CD8-positive, alpha-beta T cell (primary cell): ENCODE measurements at regions of chr16 and their contacts with region 1.

Region 1: DNA sequence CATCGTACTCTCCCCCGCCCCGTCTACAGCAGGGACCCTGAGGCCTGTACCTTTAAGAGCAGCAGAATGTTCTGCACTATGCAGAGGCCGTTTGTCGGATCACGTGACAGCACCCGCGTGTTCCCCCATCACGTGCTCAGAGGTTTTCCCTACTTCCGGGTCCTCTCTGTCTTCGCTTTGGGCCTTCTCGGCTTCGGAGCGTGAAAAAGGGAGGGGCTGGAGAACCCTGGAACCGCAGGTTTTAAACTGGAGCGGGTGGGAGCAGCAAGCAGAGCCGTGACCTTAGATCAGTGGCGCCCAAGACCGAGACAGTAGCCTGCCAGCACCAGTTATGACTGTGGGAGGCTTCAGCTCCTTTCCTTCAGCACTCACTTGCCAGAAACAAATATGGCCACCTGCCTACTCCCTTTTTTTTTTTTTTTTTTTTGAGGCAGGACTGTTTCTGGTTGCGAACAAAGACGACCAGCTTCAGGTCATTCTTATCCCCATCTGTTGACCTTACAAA is at the start of gene CLN3:
- DNase-seq: peak; percentile 74 to 95 (median 89)
- ATAC-seq: peak; percentile 48
- H3K4me3 ChIP-seq: peak within 1 kb of the TSS; percentile 95 to 96
- H3K4me3 Mint-ChIP-seq: peak within 1 kb of the TSS; percentile 97
- H3K27ac ChIP-seq: peak within 1 kb of the TSS; percentile 91 to 97
- H3K27ac Mint-ChIP-seq: peak within 1 kb of the TSS; percentile 100
- H3K4me1 ChIP-seq: peaks cover 42% of the 10 kb centered on the region
- H3K4me1 Mint-ChIP-seq: peaks cover 67% of the 10 kb centered on the region
- H3K27me3 ChIP-seq: no peaks in the 10 kb centered on the region
- H3K27me3 Mint-ChIP-seq: no peaks in the 10 kb centered on the region
- CTCF ChIP-seq: no peak
- total RNA-seq, gene CLN3: 37.0 to 43.2 TPM

Region 2: GRCh38 chr16:28211712-28212534 is 280.1 kb before region 1 on chr16 and contains the start of gene XPO6:
- CTCF ChIA-PET with region 1: no interaction called
- POLR2A ChIA-PET with region 1: no interaction called
- intact Hi-C with region 1: no loop called
- DNase-seq: peak; percentile 96 to 100 (median 99)
- ATAC-seq: peak; percentile 90
- H3K4me3 ChIP-seq: peak within 1 kb of the TSS; percentile 69 to 91
- H3K4me3 Mint-ChIP-seq: peak within 1 kb of the TSS; percentile 90
- H3K27ac ChIP-seq: peak within 1 kb of the TSS; percentile 75 to 76
- H3K27ac Mint-ChIP-seq: peak within 1 kb of the TSS; percentile 91
- H3K4me1 ChIP-seq: peaks cover 32% of the 10 kb centered on the region
- H3K4me1 Mint-ChIP-seq: peaks cover 37% of the 10 kb centered on the region
- H3K27me3 ChIP-seq: no peaks in the 10 kb centered on the region
- H3K27me3 Mint-ChIP-seq: no peaks in the 10 kb centered on the region
- CTCF ChIP-seq: no peak
- total RNA-seq, gene XPO6: 355 to 369 TPM

Region 3: DNA sequence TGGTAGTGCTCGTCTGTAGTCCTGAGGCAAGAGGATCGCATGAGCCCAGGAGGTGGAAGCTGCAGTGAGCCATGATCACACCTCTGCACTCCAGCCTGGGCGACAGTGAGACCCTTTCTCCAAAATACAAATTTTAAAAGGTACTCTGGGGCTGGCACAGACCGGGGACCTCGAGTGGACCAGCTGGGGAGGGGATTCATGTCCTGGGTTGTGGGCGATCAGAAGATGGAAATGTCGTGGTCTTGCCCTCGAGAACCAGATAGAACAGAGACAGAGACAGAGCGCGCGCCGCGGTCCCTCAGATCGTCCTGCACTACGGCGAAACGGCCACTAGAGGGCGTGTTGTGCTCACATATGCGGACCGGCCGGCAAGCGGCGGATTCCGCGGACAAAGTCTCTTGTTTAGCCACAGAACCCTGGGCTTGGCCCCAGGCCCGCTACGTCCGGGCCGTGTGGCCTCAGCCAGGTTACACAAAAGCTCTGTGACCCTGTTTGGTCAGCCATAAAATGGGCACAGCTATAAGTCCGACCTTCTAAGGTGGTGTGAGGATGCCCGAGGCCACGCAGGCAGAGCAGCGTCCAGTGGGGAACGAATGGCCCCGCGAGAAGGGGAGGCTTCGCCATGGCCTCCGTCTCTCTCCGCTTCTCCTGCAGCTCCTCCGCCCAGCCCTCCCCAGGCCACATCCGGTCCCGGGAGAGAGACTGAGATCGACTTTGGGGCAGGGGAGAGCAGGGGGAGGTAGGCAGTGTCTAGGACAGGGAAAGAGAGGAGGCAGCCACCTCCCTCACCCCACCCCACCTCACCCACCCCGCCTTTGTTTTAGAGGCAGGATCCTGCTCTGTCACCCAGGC is 214.3 kb before region 1 on chr16:
- CTCF ChIA-PET with region 1: no interaction called
- POLR2A ChIA-PET with region 1: no interaction called
- intact Hi-C with region 1: loop called in 1 of 2 experiments (anchors 5 kb)
- DNase-seq: peak; percentile 72 to 95 (median 88)
- ATAC-seq: peak; percentile 80
- H3K4me3 ChIP-seq: peak overlapping the region; percentile 60 to 90
- H3K4me3 Mint-ChIP-seq: peak overlapping the region; percentile 81
- H3K27ac ChIP-seq: peak overlapping the region; percentile 57 to 68
- H3K27ac Mint-ChIP-seq: peak overlapping the region; percentile 95
- H3K4me1 ChIP-seq: peaks cover 45% of the 10 kb centered on the region
- H3K4me1 Mint-ChIP-seq: peaks cover 40% of the 10 kb centered on the region
- H3K27me3 ChIP-seq: no peaks in the 10 kb centered on the region
- H3K27me3 Mint-ChIP-seq: no peaks in the 10 kb centered on the region
- CTCF ChIP-seq: peak; percentile 95

Region 4: DNA sequence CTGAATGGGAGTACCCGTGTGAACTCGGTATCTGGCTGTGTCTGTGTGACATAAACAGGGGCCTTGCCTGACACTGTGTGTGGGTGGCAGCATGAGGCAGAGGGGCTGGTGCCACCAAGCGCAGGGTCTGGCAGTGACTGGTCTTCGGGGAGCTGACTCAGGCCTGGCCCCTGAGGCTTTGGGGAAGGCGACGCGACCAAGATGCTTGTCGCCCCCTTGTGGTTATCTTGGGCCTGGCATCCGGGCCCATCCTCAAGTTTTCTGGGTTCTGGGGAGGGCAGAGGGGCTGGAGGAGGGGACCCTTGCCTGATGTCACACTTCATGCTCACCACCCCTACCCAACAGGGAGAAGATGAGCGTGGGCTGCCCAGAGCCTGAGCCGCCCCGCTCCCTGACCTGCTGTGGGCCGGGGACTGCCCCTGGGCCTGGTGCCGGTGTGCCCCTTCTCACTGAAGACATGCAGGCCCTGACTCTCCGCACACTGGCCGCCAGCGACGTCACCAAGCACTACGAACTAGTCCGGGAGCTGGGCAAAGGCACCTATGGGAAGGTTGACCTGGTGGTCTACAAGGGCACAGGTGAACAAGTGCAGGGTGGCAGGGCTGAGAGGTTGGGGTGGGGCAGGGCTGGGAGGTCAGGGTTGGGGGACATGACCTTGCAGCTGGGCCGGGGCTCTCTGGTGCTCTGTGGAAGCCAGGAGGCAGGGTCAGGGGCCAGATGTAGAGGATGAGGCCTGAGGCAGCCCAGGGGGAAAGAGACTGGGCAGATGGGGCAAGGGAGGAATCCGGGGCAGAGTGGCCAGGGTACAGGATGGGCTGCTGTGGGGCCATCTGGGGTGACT is 174.8 kb before region 1 on chr16:
- CTCF ChIA-PET with region 1: no interaction called
- POLR2A ChIA-PET with region 1: no interaction called
- intact Hi-C with region 1: no loop called
- DNase-seq: peak; percentile 48 to 86 (median 77)
- ATAC-seq: peak; percentile 78
- H3K4me3 ChIP-seq: no peak overlapping the region
- H3K4me3 Mint-ChIP-seq: peak overlapping the region; percentile 41
- H3K27ac ChIP-seq: peak overlapping the region in 1 of 2 experiments; percentile 42
- H3K27ac Mint-ChIP-seq: peak overlapping the region; percentile 84
- H3K4me1 ChIP-seq: peaks cover 48% of the 10 kb centered on the region
- H3K4me1 Mint-ChIP-seq: peaks cover 43% of the 10 kb centered on the region
- H3K27me3 ChIP-seq: no peaks in the 10 kb centered on the region
- H3K27me3 Mint-ChIP-seq: no peaks in the 10 kb centered on the region
- CTCF ChIP-seq: peak; percentile 76

Region 5: GRCh38 chr16:28504707-28505409 is 12.8 kb after region 1 on chr16:
- CTCF ChIA-PET with region 1: interaction called, 4 read pairs
- POLR2A ChIA-PET with region 1: interaction called, 12 read pairs
- intact Hi-C with region 1: no loop called
- DNase-seq: no peak
- ATAC-seq: no peak
- H3K4me3 ChIP-seq: no peak overlapping the region
- H3K4me3 Mint-ChIP-seq: no peak overlapping the region
- H3K27ac ChIP-seq: no peak overlapping the region
- H3K27ac Mint-ChIP-seq: no peak overlapping the region
- H3K4me1 ChIP-seq: peaks cover 11% of the 10 kb centered on the region
- H3K4me1 Mint-ChIP-seq: peaks cover 14% of the 10 kb centered on the region
- H3K27me3 ChIP-seq: no peaks in the 10 kb centered on the region
- H3K27me3 Mint-ChIP-seq: no peaks in the 10 kb centered on the region
- CTCF ChIP-seq: no peak

Region 6: GRCh38 chr16:28553776-28554633 is 62.0 kb after region 1 on chr16 and contains the start of gene SGF29:
- CTCF ChIA-PET with region 1: interaction called, 6 read pairs
- POLR2A ChIA-PET with region 1: interaction called, 18 read pairs
- intact Hi-C with region 1: loop called (anchors 1 kb)
- DNase-seq: peak; percentile 86 to 97 (median 93)
- ATAC-seq: peak; percentile 93
- H3K4me3 ChIP-seq: peak within 1 kb of the TSS; percentile 87 to 99
- H3K4me3 Mint-ChIP-seq: peak within 1 kb of the TSS; percentile 92
- H3K27ac ChIP-seq: peak within 1 kb of the TSS; percentile 95 to 98
- H3K27ac Mint-ChIP-seq: peak within 1 kb of the TSS; percentile 98
- H3K4me1 ChIP-seq: peaks cover 18% of the 10 kb centered on the region
- H3K4me1 Mint-ChIP-seq: peaks cover 36% of the 10 kb centered on the region
- H3K27me3 ChIP-seq: no peaks in the 10 kb centered on the region
- H3K27me3 Mint-ChIP-seq: no peaks in the 10 kb centered on the region
- CTCF ChIP-seq: no peak
- total RNA-seq, gene SGF29: 41.1 to 44.5 TPM

Region 7: DNA sequence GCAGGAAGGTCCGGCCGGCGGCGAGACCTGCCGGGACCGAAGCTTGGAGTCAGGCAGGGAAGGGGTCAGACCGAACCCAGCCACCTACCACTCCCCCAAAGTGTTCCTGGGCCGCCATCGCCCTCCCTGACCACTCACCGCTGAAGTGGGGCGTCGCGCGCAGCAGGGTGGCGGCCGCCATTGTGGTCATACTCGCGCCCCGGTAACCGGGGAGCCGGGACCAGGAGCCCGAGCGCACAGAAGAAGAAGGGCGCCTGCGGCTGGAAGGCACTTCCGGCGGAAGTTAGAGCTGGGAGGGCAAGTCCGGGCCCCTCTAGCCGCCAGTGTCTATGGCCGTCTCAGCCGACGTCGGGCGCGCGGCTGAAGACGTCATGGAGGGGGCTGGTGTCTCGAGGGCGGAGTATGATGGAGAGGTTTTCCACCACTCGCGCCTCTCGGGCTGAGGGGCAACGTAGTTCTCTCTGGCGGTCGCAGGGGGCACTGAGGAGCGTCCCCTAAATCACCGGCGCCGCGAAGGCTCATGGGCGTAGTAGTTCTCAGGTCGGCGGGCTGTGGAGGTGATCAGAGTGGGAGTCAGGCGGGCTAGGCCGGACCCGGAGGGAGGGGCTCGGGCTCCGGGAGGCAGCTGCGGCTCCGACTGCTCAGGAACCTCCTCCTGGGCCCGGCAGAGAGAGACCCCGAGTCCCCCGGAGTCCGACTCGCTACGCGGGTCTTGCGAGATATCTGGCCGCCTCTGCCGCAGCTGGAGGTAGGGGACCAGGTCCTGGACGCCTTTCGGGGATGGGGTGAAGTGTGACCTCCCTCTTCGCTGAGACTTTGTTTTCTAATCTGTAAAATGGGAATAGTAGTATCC is 354.3 kb after region 1 on chr16 and contains the start of gene TUFM:
- CTCF ChIA-PET with region 1: interaction called, 3 read pairs
- POLR2A ChIA-PET with region 1: interaction called, 3 read pairs
- intact Hi-C with region 1: loop called in 1 of 2 experiments (anchors 1 kb)
- DNase-seq: peak; percentile 96 to 99 (median 98)
- ATAC-seq: peak; percentile 96
- H3K4me3 ChIP-seq: peak within 1 kb of the TSS; percentile 83 to 100
- H3K4me3 Mint-ChIP-seq: peak within 1 kb of the TSS; percentile 91
- H3K27ac ChIP-seq: peak within 1 kb of the TSS; percentile 78 to 93
- H3K27ac Mint-ChIP-seq: peak within 1 kb of the TSS; percentile 94
- H3K4me1 ChIP-seq: peaks cover 23% of the 10 kb centered on the region
- H3K4me1 Mint-ChIP-seq: peaks cover 32% of the 10 kb centered on the region
- H3K27me3 ChIP-seq: no peaks in the 10 kb centered on the region
- H3K27me3 Mint-ChIP-seq: no peaks in the 10 kb centered on the region
- CTCF ChIP-seq: peak; percentile 75
- total RNA-seq, gene TUFM: 111 to 119 TPM

Region 8: GRCh38 chr16:28924732-28925385 is 432.8 kb after region 1 on chr16 and contains the start of gene RABEP2:
- CTCF ChIA-PET with region 1: no interaction called
- POLR2A ChIA-PET with region 1: no interaction called
- intact Hi-C with region 1: loop called (anchors 2 kb)
- DNase-seq: peak; percentile 92 to 99 (median 94)
- ATAC-seq: peak; percentile 77
- H3K4me3 ChIP-seq: peak within 1 kb of the TSS; percentile 96 to 97
- H3K4me3 Mint-ChIP-seq: peak within 1 kb of the TSS; percentile 94
- H3K27ac ChIP-seq: peak within 1 kb of the TSS; percentile 98
- H3K27ac Mint-ChIP-seq: peak within 1 kb of the TSS; percentile 97
- H3K4me1 ChIP-seq: peaks cover 10% of the 10 kb centered on the region
- H3K4me1 Mint-ChIP-seq: peaks cover 25% of the 10 kb centered on the region
- H3K27me3 ChIP-seq: no peaks in the 10 kb centered on the region
- H3K27me3 Mint-ChIP-seq: no peaks in the 10 kb centered on the region
- CTCF ChIP-seq: no peak
- total RNA-seq, gene RABEP2: 26.5 to 29.0 TPM

Region 9: GRCh38 chr16:28984619-28985135 is 492.7 kb after region 1 on chr16 and contains the start of gene LAT:
- CTCF ChIA-PET with region 1: no interaction called
- POLR2A ChIA-PET with region 1: no interaction called
- intact Hi-C with region 1: loop called in 1 of 2 experiments (anchors 5 kb)
- DNase-seq: peak; percentile 60 to 91 (median 85)
- ATAC-seq: peak; percentile 69
- H3K4me3 ChIP-seq: peak within 1 kb of the TSS; percentile 95 to 100
- H3K4me3 Mint-ChIP-seq: peak within 1 kb of the TSS; percentile 99
- H3K27ac ChIP-seq: peak within 1 kb of the TSS; percentile 71 to 76
- H3K27ac Mint-ChIP-seq: peak within 1 kb of the TSS; percentile 95
- H3K4me1 ChIP-seq: peaks cover 54% of the 10 kb centered on the region
- H3K4me1 Mint-ChIP-seq: peaks cover 49% of the 10 kb centered on the region
- H3K27me3 ChIP-seq: no peaks in the 10 kb centered on the region
- H3K27me3 Mint-ChIP-seq: no peaks in the 10 kb centered on the region
- CTCF ChIP-seq: no peak
- total RNA-seq, gene LAT: 175 to 176 TPM